B cell (primary cell): ENCODE measurements at regions of chr2 and their contacts with region 1.

Region 1: DNA sequence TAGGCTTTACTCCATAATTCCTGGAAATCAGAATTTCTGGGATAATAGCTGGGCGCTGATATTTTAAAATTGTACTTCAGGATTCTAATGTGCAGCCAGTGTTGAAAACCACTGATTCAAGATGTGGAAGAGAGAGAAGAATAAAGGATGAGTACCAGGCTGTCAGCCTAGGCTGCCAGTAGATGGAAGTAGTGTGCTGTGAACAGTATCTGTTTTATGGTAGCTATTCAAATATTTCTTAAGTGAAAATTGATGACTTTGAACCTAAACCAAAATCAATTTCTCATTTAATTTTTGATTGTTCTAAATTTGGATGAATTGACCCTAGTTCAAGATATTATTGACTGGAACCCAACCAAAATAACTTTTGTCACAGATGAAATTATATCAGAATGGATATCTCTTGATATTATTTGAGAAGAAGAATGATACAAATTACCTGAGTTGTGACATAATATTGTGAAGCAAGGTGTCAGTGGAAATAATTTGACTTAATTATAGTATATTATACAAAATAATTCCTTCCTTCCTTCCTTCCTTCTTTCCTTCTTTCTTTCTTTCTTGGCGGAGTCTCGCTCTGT is 88.1 kb downstream of the COMMD1 start:
- DNase-seq: peak; percentile 64
- ATAC-seq: peak; percentile 43
- H3K4me3 ChIP-seq: no peak overlapping the region
- H3K4me3 Mint-ChIP-seq: no peak overlapping the region
- H3K27ac ChIP-seq: no peak overlapping the region
- H3K27ac Mint-ChIP-seq: no peak overlapping the region
- H3K4me1 ChIP-seq: no peaks in the 10 kb centered on the region
- H3K4me1 Mint-ChIP-seq: peaks cover 2% of the 10 kb centered on the region
- H3K27me3 ChIP-seq: no peaks in the 10 kb centered on the region
- H3K27me3 Mint-ChIP-seq: no peaks in the 10 kb centered on the region
- CTCF ChIP-seq: peak; percentile 77

Region 2: GRCh38 chr2:62415019-62415431 is 421.5 kb after region 1 on chr2:
- CTCF ChIA-PET with region 1: interaction called, 105 read pairs
- POLR2A ChIA-PET with region 1: no interaction called
- intact Hi-C with region 1: no loop called
- DNase-seq: no peak
- ATAC-seq: no peak
- H3K4me3 ChIP-seq: no peak overlapping the region
- H3K4me3 Mint-ChIP-seq: no peak overlapping the region
- H3K27ac ChIP-seq: peak overlapping the region in 1 of 2 donors; percentile 28
- H3K27ac Mint-ChIP-seq: no peak overlapping the region
- H3K4me1 ChIP-seq: peaks cover 8 to 17% of the 10 kb centered on the region in 2 donors
- H3K4me1 Mint-ChIP-seq: peaks cover 6% of the 10 kb centered on the region
- H3K27me3 ChIP-seq: no peaks in the 10 kb centered on the region
- H3K27me3 Mint-ChIP-seq: peaks cover 3% of the 10 kb centered on the region
- CTCF ChIP-seq: no peak

Region 3: GRCh38 chr2:62774555-62775366 is 781.2 kb after region 1 on chr2:
- CTCF ChIA-PET with region 1: interaction called, 8 read pairs
- POLR2A ChIA-PET with region 1: no interaction called
- intact Hi-C with region 1: loop called (anchors 1 kb)
- DNase-seq: peak; percentile 46
- ATAC-seq: no peak
- H3K4me3 ChIP-seq: no peak overlapping the region
- H3K4me3 Mint-ChIP-seq: no peak overlapping the region
- H3K27ac ChIP-seq: no peak overlapping the region
- H3K27ac Mint-ChIP-seq: no peak overlapping the region
- H3K4me1 ChIP-seq: no peaks in the 10 kb centered on the region
- H3K4me1 Mint-ChIP-seq: no peaks in the 10 kb centered on the region
- H3K27me3 ChIP-seq: no peaks in the 10 kb centered on the region
- H3K27me3 Mint-ChIP-seq: no peaks in the 10 kb centered on the region
- CTCF ChIP-seq: peak; percentile 88